A549 (cell line): ENCODE measurements at regions of chr6 and their contacts with region 1.

Region 1: DNA sequence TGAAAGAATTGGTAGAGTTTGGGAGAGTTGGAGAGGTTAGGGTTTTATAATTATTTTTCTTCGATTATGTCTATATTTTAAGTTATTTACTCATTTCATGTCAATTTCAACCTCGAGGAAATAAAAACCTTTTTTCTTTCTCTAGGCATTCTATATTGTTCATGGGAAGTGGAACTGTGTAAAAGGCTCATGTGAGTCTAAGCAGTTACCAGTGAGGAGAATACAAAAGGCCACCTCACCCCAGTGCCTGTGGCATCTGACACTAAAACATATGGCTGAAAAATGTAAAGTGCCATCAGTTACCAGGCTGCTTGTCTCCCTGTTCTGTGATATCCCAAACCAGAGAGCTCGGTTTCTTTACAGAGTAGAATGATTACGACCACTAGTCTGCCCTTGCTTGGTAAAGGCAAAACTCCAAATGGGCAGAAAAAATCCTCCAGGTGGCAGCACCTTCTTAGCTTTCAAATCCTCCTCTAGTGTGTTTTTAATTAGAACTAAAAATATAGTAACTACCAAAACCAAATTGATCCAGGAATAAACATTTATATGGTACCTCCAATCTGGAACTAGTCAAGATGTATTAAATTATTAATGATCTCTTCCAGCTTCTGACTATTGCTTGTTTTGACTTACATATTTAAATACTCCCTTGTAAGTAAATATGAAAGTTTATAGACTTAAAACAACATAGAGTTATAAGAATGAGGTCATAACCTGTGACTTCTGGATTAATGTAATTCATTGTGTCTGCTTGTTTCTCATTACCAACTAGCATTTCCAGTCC is 122.6 kb upstream of the MCHR2 start:
- DNase-seq: peak; percentile 23 to 67
- ATAC-seq: peak; percentile 70 to 89; a peak in 5 of 6 replicates
- H3K4me3 ChIP-seq: no peak overlapping the region
- H3K27ac ChIP-seq: no peak overlapping the region; a peak in 1 of 6 replicates
- H3K4me1 ChIP-seq: no peaks in the 10 kb centered on the region
- CTCF ChIP-seq: peak; percentile 83
- EP300 ChIP-seq: no peak
- POLR2A ChIP-seq: no peak
- RAD21 ChIP-seq: peak; percentile 88 to 90

Region 2: GRCh38 chr6:99761711-99762110 is 354.9 kb before region 1 on chr6:
- CTCF ChIA-PET with region 1: no interaction called
- POLR2A ChIA-PET with region 1: no interaction called
- DNase-seq: no peak
- ATAC-seq: no peak
- H3K4me3 ChIP-seq: no peak overlapping the region
- H3K27ac ChIP-seq: no peak overlapping the region
- H3K4me1 ChIP-seq: no peaks in the 10 kb centered on the region
- CTCF ChIP-seq: no peak
- EP300 ChIP-seq: no peak
- POLR2A ChIP-seq: no peak
- RAD21 ChIP-seq: no peak

Region 3: DNA sequence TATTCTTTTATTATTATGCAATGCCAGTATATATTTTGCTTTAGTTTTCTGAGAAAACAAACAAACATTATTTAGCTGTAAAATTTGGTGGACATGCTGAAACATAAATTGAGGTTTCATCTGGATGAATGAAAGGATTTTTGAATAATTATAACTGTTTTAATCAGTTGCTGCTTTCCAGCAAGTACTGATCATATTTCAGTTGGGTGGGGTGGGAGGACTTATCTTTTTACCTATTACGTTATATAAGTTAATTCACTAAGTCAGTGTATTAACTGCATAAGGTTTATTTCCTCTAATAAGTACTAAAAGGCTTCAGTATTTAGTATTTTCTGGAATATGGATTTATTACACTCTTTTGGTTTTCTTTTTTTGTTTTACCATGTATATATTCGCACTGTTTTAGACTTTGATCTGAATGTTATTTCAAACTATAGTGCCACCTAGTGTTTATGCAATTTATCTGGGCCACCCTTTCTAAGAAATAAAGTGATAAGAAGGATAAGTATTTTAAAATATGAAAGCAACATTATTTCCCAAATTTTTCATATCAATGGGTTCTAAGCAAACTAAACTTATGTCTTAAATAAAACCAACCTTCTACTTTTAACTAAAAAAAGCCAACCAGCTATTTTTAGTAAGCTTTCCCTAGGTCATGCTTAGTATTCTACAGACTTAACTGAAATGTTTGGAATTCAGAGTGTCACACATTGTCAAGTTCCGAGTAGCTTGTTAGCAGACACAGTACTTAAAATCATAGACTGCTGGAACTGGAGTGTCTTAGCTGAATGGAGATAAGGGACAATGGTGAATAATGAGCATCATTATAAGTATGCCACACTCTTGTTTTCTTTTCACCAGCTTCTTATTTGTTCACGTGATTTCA is 17.2 kb before region 1 on chr6:
- CTCF ChIA-PET with region 1: interaction called, 10 read pairs
- POLR2A ChIA-PET with region 1: no interaction called
- DNase-seq: peak in 1 of 2 experiments; percentile 20
- ATAC-seq: peak in 1 of 2 experiments; percentile 62; a peak in 4 of 6 replicates
- H3K4me3 ChIP-seq: no peak overlapping the region
- H3K27ac ChIP-seq: no peak overlapping the region
- H3K4me1 ChIP-seq: no peaks in the 10 kb centered on the region
- CTCF ChIP-seq: peak; percentile 57
- EP300 ChIP-seq: no peak
- POLR2A ChIP-seq: no peak
- RAD21 ChIP-seq: peak; percentile 39 to 49

Region 4: GRCh38 chr6:100105138-100105753 is 11.4 kb before region 1 on chr6:
- CTCF ChIA-PET with region 1: interaction called, 13 read pairs
- POLR2A ChIA-PET with region 1: no interaction called
- DNase-seq: no peak
- ATAC-seq: no peak
- H3K4me3 ChIP-seq: no peak overlapping the region
- H3K27ac ChIP-seq: no peak overlapping the region
- H3K4me1 ChIP-seq: no peaks in the 10 kb centered on the region
- CTCF ChIP-seq: no peak
- EP300 ChIP-seq: no peak
- POLR2A ChIP-seq: no peak
- RAD21 ChIP-seq: no peak

Region 5: DNA sequence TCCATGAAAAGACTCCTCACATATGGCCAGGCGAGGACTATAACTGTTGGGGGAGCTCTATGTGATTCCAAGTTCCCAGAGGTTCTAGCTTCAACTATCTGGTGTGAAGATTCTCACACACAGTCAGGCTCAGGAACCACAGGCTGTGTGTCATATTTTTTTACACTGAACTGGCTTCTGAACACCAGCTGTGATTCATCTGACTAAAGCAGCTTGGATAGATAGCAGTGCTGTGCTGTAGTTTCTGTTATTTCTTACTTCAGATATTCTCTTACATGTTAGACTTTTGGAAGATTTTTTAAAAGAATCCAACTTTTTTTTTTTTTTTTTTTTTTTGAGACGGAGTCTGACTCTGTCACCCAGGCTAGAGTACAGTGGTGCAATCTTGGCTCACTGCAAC is 18.1 kb after region 1 on chr6:
- CTCF ChIA-PET with region 1: no interaction called
- POLR2A ChIA-PET with region 1: no interaction called
- DNase-seq: no peak
- ATAC-seq: no peak
- H3K4me3 ChIP-seq: no peak overlapping the region
- H3K27ac ChIP-seq: no peak overlapping the region
- H3K4me1 ChIP-seq: no peaks in the 10 kb centered on the region
- CTCF ChIP-seq: no peak
- EP300 ChIP-seq: no peak
- POLR2A ChIP-seq: no peak
- RAD21 ChIP-seq: no peak

Region 6: GRCh38 chr6:100479179-100480035 is 362.8 kb after region 1 on chr6:
- CTCF ChIA-PET with region 1: interaction called, 36 read pairs
- POLR2A ChIA-PET with region 1: no interaction called
- DNase-seq: peak in 1 of 2 experiments; percentile 45
- ATAC-seq: peak; percentile 66 to 76; a peak in 4 of 6 replicates
- H3K4me3 ChIP-seq: no peak overlapping the region
- H3K27ac ChIP-seq: peak overlapping the region in 1 of 2 experiments; percentile 46; a peak in 3 of 6 replicates
- H3K4me1 ChIP-seq: peaks cover 13% of the 10 kb centered on the region; the same call in 2 of the 3 replicates
- CTCF ChIP-seq: peak; percentile 76
- EP300 ChIP-seq: no peak
- POLR2A ChIP-seq: no peak
- RAD21 ChIP-seq: peak; percentile 85 to 88